ENCODE measurements at regions of chr12 and their contacts with region 1.

Region 1: DNA sequence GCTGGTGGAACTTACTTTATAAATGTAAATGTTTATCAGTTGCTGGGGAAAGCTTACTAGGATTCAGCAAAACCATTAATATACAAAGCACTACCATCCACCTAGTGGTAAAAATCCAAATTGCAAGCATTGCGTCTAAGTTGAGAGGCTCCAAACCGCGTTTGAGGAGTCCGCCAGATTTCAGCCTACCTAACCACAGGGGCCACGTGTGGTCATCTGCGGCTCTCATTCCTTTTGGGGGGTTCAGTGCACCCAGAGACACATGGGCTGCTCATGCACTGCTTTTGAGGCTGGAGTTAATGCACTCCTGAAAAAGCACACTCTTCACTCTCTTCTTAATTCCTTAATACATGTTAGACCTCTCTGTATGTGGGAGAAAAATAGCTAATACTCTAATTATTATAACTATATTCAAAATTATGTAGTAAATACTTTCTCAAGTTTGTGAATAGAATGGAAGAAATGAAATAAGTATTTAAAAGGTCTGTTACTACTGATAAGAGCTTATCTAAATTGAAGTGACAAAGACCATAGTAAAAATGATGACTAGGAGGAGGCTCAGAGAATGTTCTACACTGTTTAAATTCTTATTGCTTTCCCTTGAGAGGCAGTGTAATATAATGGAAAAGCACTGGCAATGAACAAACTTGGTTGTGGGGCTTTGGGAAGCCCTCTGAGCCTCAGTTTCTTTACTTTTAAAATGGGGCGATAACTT is 41.4 kb upstream of the MANSC4 start:
- DNase-seq: peak in 3 of 6 donors; percentile 30 to 52 (median 41)
- ATAC-seq: peak; percentile 77 to 86 (median 84)
- H3K4me3 ChIP-seq: no peak overlapping the region
- H3K27ac ChIP-seq: no peak overlapping the region
- H3K4me1 ChIP-seq: peaks cover 0 to 11% (median 8%) of the 10 kb centered on the region in 3 donors
- H3K27me3 ChIP-seq: no peaks in the 10 kb centered on the region
- CTCF ChIP-seq: peak; percentile 51 to 72 (median 61)

Region 2: DNA sequence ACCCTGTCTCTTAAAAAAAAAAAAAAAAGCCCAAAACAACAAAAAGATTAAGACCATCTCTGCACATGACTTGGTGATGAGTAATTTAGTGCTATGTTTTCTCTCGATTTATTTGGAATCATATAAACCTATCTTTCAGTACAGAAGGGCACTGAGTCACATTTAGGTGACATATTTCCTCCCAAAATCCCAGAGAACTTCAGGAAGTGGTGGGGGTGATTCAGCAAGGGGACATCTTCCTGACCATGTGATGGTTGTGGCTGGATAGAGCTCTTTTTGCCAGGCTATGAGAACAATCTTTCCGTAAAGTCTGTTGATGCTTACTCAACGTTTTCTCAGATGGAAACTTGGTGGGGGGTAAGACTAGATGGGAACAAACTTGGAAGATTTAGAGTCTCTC is 247.4 kb before region 1 on chr12:
- intact Hi-C with region 1: no loop called
- DNase-seq: no peak
- ATAC-seq: peak in 1 of 4 donors; percentile 20
- H3K4me3 ChIP-seq: no peak overlapping the region
- H3K27ac ChIP-seq: no peak overlapping the region
- H3K4me1 ChIP-seq: peaks cover 0 to 6% (median 0%) of the 10 kb centered on the region in 3 donors
- H3K27me3 ChIP-seq: no peaks in the 10 kb centered on the region
- CTCF ChIP-seq: no peak

Region 3: GRCh38 chr12:27747111-27747820 is 74.2 kb before region 1 on chr12:
- intact Hi-C with region 1: loop called in 1 of 3 experiments (anchors 10 kb)
- DNase-seq: no peak
- ATAC-seq: peak in 3 of 4 donors; percentile 72 to 84 (median 74)
- H3K4me3 ChIP-seq: no peak overlapping the region
- H3K27ac ChIP-seq: peak overlapping the region in 3 of 4 donors; percentile 2 to 72 (median 71)
- H3K4me1 ChIP-seq: peaks cover 4 to 16% (median 4%) of the 10 kb centered on the region in 3 donors
- H3K27me3 ChIP-seq: no peaks in the 10 kb centered on the region
- CTCF ChIP-seq: no peak

Measured in pancreas (tissue), 10 donors.